ENCODE measurements at regions of chr11 and their contacts with region 1.

Region 1: DNA sequence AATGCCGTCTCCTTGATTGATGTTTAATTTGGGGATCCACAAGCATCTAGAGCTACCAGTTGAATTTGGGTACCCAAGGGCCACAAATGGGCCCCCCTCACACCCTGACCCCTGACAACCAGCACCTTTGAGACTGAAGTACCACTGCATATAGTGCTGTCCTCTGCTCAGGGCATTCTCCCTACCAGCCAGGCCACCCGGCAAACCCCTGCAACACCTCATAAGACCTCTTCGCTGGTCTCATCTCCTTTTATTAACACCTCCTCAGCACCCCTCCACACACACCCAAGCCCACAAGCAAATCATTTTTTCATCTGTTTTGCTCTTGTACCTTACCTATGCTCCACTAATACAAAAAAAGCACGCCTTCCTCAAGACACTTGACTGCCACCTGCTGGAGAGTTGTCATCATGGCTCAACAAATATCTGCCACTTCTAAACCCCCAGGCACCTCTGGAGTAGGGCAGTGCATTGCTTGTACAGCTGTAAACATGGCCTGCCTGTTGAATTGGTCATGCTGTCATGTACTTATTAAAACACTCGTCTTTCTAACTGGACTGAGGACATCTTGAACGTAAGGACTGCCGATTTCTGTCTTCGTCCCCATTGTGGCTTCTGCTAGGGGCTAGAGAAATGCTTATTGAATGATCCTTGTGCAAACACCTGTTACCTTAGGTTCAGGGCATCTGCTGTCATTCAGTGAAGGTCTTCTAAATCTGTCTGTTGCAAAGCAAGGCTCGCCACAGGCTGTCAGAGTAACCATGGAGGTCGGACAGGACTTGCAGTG is 66.5 kb downstream of the BMAL1 start:
- DNase-seq: peak in 2 of 3 donors; percentile 54 to 68
- ATAC-seq: peak; percentile 22 to 47
- H3K4me3 ChIP-seq: no peak overlapping the region
- H3K27ac ChIP-seq: no peak overlapping the region
- H3K4me1 ChIP-seq: peaks cover 10% of the 10 kb centered on the region
- H3K27me3 ChIP-seq: no peaks in the 10 kb centered on the region

Region 2: GRCh38 chr11:12979928-12980689 is 364.0 kb before region 1 on chr11:
- intact Hi-C with region 1: loop called in 1 of 4 experiments (anchors 10 kb)
- DNase-seq: no peak
- ATAC-seq: no peak
- H3K4me3 ChIP-seq: no peak overlapping the region
- H3K27ac ChIP-seq: no peak overlapping the region
- H3K4me1 ChIP-seq: no peaks in the 10 kb centered on the region
- H3K27me3 ChIP-seq: no peaks in the 10 kb centered on the region

Region 3: DNA sequence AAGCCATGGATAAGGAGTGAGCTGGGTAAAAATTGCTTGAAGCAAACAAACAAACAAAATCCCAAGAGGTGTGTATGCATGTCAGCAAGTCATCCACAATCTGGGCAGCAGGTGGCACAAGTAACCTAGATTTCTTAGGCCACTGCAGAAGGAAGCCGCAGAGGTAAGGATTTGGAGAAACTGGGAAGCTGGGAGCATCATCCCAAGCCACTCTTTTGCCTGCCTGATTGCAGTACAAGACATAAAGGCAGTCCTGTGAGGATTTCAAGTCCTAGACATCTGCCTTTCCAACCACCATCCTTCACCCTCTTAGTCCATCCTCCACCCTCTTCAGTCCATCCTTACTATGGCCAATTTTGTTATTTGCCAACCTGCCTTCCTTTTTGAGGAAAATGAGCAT is 133.7 kb before region 1 on chr11:
- intact Hi-C with region 1: loop called (anchors 2 to 10 kb)
- DNase-seq: peak; percentile 37 to 80 (median 70)
- ATAC-seq: peak; percentile 55 to 63
- H3K4me3 ChIP-seq: no peak overlapping the region
- H3K27ac ChIP-seq: no peak overlapping the region
- H3K4me1 ChIP-seq: peaks cover 6% of the 10 kb centered on the region
- H3K27me3 ChIP-seq: no peaks in the 10 kb centered on the region